H1 (cell line): ENCODE measurements at regions of chr1 and their contacts with region 1.

Region 1: DNA sequence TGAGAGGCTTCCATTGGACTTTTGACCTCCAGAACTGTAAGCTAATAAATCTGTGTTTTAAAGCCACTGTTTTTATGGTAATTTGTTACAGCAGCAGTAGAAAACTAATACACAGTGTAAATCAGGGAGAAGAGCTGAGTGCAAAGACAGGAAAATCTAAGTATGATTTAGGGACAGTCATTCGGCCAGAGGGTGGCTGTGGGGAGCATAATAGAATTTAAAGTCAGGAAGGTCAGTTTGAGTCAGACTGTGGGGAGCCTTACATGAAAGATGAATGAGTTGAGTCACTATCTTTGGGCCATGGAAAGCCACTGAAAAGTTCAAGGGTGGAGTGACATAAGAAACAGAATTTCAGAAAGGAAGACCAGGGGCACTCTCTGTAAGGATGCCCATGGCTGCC is 52.4 kb upstream of the SSX2IP start:
- DNase-seq: no peak
- H3K4me3 ChIP-seq: no peak overlapping the region
- H3K27ac ChIP-seq: no peak overlapping the region
- H3K4me1 ChIP-seq: peaks cover 0 to 14% (median 8%) of the 10 kb centered on the region in 4 experiments; a peak in 5 of 7 replicates
- H3K27me3 ChIP-seq: no peaks in the 10 kb centered on the region
- CTCF ChIP-seq: no peak
- EP300 ChIP-seq: no peak
- POLR2A ChIP-seq: no peak
- RAD21 ChIP-seq: no peak

Region 2: GRCh38 chr1:84758968-84759491 is 16.4 kb after region 1 on chr1:
- CTCF ChIA-PET with region 1: interaction called, 34 read pairs
- POLR2A ChIA-PET with region 1: interaction called, 3 read pairs
- DNase-seq: no peak
- H3K4me3 ChIP-seq: no peak overlapping the region
- H3K27ac ChIP-seq: no peak overlapping the region
- H3K4me1 ChIP-seq: peaks cover 0 to 11% (median 5%) of the 10 kb centered on the region in 4 experiments; a peak in 5 of 7 replicates
- H3K27me3 ChIP-seq: no peaks in the 10 kb centered on the region
- CTCF ChIP-seq: no peak
- EP300 ChIP-seq: no peak
- POLR2A ChIP-seq: no peak
- RAD21 ChIP-seq: no peak

Region 3: DNA sequence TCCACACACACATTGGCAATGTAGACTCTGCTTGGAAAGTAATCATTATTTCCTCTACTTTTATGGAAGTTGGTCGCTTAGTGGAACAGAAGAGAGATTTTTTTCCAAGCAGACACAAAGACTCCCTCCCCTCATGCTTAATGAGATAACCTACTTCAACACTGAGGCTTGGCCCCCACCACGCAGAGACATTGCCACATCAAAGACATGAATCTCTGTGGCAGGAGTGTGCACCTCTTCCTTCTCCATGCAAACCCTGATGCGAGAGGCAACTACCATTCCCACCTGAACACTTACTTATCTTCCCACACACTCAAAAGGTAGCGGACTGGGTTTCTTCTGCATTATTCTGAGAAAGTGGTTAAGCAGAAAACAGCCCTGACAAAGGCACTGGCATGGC is 187.7 kb after region 1 on chr1:
- CTCF ChIA-PET with region 1: no interaction called
- POLR2A ChIA-PET with region 1: no interaction called
- DNase-seq: no peak
- H3K4me3 ChIP-seq: no peak overlapping the region
- H3K27ac ChIP-seq: no peak overlapping the region
- H3K4me1 ChIP-seq: peaks cover 0 to 3% (median 0%) of the 10 kb centered on the region in 4 experiments; a peak in 1 of 7 replicates
- H3K27me3 ChIP-seq: no peaks in the 10 kb centered on the region
- CTCF ChIP-seq: no peak
- EP300 ChIP-seq: no peak
- POLR2A ChIP-seq: no peak
- RAD21 ChIP-seq: no peak